GM23248 (cell line): ENCODE measurements at regions of chr18 and their contacts with region 1.

Region 1: DNA sequence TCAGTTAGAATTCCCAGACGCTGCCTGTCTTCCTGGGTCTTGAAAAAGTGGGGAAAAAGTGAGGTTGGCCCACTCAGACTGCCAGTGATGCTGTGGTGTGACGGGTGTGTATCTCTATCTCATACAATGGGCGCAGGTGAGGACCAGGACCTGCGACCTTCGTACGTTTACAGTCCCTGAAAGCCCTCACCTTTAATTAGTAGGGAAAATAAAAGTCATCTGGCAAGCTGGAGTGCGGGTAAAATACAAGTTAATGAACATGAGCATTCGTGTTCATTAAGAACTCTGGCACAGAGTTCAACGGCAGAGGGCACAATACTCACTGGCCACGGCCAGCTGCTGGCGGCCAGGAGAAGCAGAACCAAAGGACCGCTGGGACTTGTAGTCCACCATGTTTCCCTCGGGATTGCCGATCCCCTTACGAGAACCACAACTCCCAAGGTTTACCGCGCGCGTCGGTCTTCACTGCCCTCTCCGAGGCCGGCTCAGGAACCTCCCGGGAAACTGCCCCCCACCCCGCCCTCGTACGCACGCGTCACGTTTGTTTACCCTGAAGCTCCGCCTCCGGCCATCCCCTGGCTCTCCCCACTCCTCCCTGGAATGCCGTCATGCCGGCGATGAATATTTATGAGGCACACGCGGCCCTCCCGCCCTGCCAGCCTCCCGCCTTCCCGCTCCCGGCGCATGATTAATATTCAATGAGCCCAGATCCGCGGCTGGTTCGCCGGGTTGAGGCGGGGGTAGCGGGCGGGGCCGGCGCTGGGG is 488 bp upstream of the PHLPP1 start:
- DNase-seq: peak; percentile 100
- H3K4me3 ChIP-seq: peak overlapping the region; percentile 69
- H3K27ac ChIP-seq: peak overlapping the region; percentile 64
- H3K4me1 ChIP-seq: peaks cover 30% of the 10 kb centered on the region
- H3K27me3 ChIP-seq: no peaks in the 10 kb centered on the region

Region 2: DNA sequence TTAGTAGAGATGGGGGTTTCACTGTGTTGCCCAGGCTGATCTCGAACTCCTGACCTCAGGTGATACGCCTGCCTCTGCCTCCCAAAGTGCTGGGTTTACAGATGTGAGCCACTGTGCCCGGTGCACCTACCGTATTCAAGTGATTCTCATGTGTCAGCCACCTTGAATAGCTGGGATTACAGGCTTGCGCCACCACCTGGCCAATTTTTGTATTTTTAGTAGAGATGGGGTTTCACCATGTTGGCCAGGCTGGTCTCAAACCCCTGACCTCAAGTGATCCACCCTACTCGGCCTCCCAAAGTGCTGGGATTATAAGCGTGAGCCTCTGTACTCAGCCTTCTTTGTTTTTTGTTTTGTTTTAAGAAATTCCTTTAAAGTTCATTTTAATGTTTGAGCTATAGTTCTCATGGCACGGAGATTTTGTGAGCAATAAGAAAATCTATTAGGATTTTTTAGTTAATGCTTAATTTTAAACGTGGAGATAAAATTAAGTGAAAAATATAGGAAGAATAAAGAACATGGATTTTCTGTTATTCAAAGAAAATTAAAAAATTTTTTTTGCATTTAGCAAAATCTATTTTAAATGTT is 243.1 kb after region 1 on chr18:
- in situ Hi-C with region 1: loop called (anchors 10 kb)
- DNase-seq: peak; percentile 51
- H3K4me3 ChIP-seq: no peak overlapping the region
- H3K27ac ChIP-seq: no peak overlapping the region
- H3K4me1 ChIP-seq: no peaks in the 10 kb centered on the region
- H3K27me3 ChIP-seq: no peaks in the 10 kb centered on the region

Region 3: GRCh38 chr18:62982600-62983251 is 267.9 kb after region 1 on chr18:
- in situ Hi-C with region 1: loop called (anchors 10 kb)
- DNase-seq: peak; percentile 57
- H3K4me3 ChIP-seq: peak overlapping the region; percentile 49
- H3K27ac ChIP-seq: no peak overlapping the region
- H3K4me1 ChIP-seq: peaks cover 3% of the 10 kb centered on the region; the same call in 1 of the 2 replicates
- H3K27me3 ChIP-seq: no peaks in the 10 kb centered on the region